Caco-2 (cell line): ENCODE measurements at regions of chr1 and their contacts with region 1.

Region 1: GRCh38 chr1:112818990-112819689 is 104.0 kb upstream of the PPM1J start:
- DNase-seq: no peak
- H3K4me3 ChIP-seq: no peak overlapping the region
- H3K4me3 Mint-ChIP-seq: no peak overlapping the region
- H3K27ac Mint-ChIP-seq: no peak overlapping the region
- H3K4me1 ChIP-seq: peaks cover 29% of the 10 kb centered on the region
- H3K4me1 Mint-ChIP-seq: peaks cover 20% of the 10 kb centered on the region
- H3K27me3 ChIP-seq: no peaks in the 10 kb centered on the region
- H3K27me3 Mint-ChIP-seq: no peaks in the 10 kb centered on the region
- CTCF ChIP-seq: no peak

Region 2: GRCh38 chr1:111214884-111215283 is 1604.3 kb before region 1 on chr1:
- CTCF ChIA-PET with region 1: no interaction called
- POLR2A ChIA-PET with region 1: interaction called, 11 read pairs
- intact Hi-C with region 1: no loop called
- DNase-seq: no peak
- H3K4me3 ChIP-seq: no peak overlapping the region
- H3K4me3 Mint-ChIP-seq: peak overlapping the region; percentile 21
- H3K27ac Mint-ChIP-seq: peak overlapping the region; percentile 49
- H3K4me1 ChIP-seq: peaks cover 24% of the 10 kb centered on the region
- H3K4me1 Mint-ChIP-seq: peaks cover 39% of the 10 kb centered on the region
- H3K27me3 ChIP-seq: no peaks in the 10 kb centered on the region
- H3K27me3 Mint-ChIP-seq: no peaks in the 10 kb centered on the region
- CTCF ChIP-seq: no peak

Region 3: DNA sequence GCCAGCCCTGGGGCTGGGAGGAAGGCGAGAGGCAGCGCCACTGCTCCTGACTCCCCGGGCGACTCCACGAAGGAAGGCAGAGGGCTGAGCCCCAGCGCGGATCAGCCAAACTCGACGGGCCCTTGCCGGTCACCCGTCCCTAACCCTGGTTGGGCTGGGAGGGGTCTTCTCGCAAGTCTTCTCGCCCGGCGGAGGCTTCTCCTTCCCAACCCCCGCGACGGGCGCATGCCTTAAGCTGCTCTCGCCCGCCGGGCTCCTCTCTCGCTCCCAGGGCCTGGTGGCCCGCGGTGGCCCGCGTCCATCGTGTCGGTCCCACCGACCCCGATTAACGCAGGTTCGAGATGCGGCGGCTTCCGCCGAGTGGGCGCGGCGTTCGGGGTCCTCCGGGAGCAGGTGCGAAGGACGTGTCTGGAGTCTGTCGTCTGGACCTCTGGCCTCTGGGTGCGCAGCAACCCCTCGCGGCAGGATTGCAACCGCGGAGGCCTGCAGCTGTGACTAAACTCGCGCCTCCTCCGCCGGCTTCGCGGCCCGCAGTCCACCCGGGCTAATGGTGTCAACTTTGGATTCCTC is 75.0 kb before region 1 on chr1:
- CTCF ChIA-PET with region 1: no interaction called
- POLR2A ChIA-PET with region 1: no interaction called
- intact Hi-C with region 1: no loop called
- DNase-seq: no peak
- H3K4me3 ChIP-seq: no peak overlapping the region
- H3K4me3 Mint-ChIP-seq: no peak overlapping the region
- H3K27ac Mint-ChIP-seq: no peak overlapping the region
- H3K4me1 ChIP-seq: no peaks in the 10 kb centered on the region
- H3K4me1 Mint-ChIP-seq: no peaks in the 10 kb centered on the region
- H3K27me3 ChIP-seq: no peaks in the 10 kb centered on the region
- H3K27me3 Mint-ChIP-seq: no peaks in the 10 kb centered on the region
- CTCF ChIP-seq: no peak